GM12878 (cell line): ENCODE measurements at regions of chr12 and their contacts with region 1.

Region 1: GRCh38 chr12:102484428-102484958 is 4.1 kb upstream of the IGF1 start:
- DNase-seq: peak; percentile 84
- ATAC-seq: peak; percentile 80
- H3K4me3 ChIP-seq: peak overlapping the region; percentile 48
- H3K27ac ChIP-seq: peak overlapping the region; percentile 100
- H3K4me1 ChIP-seq: peaks cover 54% of the 10 kb centered on the region
- H3K27me3 ChIP-seq: no peaks in the 10 kb centered on the region
- CTCF ChIP-seq: peak; percentile 79 to 91 (median 81)
- EP300 ChIP-seq: peak; percentile 87 to 90; a peak in 3 of 4 replicates
- POLR2A ChIP-seq: peak; percentile 43; the same call in 1 of the 2 replicates
- RAD21 ChIP-seq: peak; percentile 80

Region 2: DNA sequence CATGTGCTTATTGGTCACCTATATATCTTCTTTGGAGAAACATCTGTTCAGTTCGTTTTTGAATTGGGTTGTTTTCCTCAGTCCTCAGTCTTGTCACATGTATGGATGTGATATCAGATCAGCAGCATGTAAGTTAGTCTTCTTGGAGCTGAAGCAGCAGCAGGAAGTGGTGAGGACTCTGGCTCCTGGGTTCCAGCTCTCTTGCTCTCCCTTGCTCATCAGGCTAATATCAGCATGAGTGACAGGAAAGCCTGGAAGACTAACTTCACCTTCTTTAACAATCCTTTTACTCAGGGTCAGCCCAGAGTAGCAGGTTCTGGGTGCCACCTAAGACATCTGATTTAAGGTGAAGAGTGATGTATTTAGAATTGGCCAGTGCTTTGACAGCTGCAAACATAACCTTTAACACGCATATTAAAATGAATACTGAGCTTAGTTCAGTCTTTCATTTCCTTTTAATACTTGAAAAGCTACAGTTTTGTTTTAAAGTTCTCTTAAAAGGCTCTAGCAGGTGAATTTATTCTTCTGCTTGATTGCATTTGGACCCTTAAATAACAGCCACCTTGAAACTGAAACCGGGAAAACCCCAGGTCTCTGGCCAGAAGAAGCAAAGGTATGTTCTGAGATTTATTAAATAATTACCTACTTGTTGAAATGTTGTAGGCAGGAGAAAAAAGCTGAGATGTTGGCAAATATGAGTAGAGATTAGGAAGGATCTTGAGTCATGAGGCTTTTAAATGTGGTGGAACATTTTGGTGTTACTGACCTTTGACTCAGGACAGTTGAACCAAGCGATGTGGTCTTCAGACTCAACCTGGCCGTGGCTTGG is 552.8 kb before region 1 on chr12:
- CTCF ChIA-PET with region 1: interaction called, 19 read pairs
- POLR2A ChIA-PET with region 1: interaction called, 3 read pairs
- RAD21 ChIA-PET with region 1: interaction called, 13 read pairs
- SMC1A ChIA-PET with region 1: interaction called, 10 read pairs
- in situ Hi-C with region 1: loop called (anchors 5 kb)
- intact Hi-C with region 1: no loop called
- DNase-seq: peak; percentile 82
- ATAC-seq: peak; percentile 26
- H3K4me3 ChIP-seq: peak overlapping the region; percentile 71
- H3K27ac ChIP-seq: peak overlapping the region; percentile 98
- H3K4me1 ChIP-seq: peaks cover 62% of the 10 kb centered on the region
- H3K27me3 ChIP-seq: no peaks in the 10 kb centered on the region
- CTCF ChIP-seq: no peak
- EP300 ChIP-seq: peak; percentile 78 to 85; a peak in 3 of 4 replicates
- POLR2A ChIP-seq: peak; percentile 74
- RAD21 ChIP-seq: no peak

Region 3: DNA sequence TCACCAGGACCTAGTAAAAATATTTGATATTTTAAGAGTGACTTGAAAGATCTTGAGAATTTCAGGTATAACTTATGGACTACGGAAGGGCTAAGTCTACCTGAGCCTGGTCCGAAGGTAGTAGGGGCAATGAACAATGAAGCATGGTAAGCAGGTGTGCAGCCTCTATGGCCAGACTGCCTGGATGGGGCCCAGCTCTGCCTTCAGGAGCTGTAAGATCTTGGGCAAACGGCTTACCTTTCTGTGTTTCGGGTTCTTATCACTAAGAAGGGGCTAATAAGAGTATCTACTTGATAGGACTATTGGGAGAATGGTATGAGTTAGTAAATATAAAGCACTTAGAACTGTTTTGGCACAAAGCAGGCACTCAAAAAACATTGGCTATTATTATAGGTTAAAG is 403.7 kb before region 1 on chr12:
- CTCF ChIA-PET with region 1: no interaction called
- POLR2A ChIA-PET with region 1: no interaction called
- RAD21 ChIA-PET with region 1: no interaction called
- SMC1A ChIA-PET with region 1: no interaction called
- in situ Hi-C with region 1: no loop called
- intact Hi-C with region 1: no loop called
- DNase-seq: no peak
- ATAC-seq: no peak
- H3K4me3 ChIP-seq: no peak overlapping the region
- H3K27ac ChIP-seq: no peak overlapping the region
- H3K4me1 ChIP-seq: no peaks in the 10 kb centered on the region
- H3K27me3 ChIP-seq: no peaks in the 10 kb centered on the region
- CTCF ChIP-seq: no peak
- EP300 ChIP-seq: no peak
- POLR2A ChIP-seq: no peak
- RAD21 ChIP-seq: no peak

Region 4: DNA sequence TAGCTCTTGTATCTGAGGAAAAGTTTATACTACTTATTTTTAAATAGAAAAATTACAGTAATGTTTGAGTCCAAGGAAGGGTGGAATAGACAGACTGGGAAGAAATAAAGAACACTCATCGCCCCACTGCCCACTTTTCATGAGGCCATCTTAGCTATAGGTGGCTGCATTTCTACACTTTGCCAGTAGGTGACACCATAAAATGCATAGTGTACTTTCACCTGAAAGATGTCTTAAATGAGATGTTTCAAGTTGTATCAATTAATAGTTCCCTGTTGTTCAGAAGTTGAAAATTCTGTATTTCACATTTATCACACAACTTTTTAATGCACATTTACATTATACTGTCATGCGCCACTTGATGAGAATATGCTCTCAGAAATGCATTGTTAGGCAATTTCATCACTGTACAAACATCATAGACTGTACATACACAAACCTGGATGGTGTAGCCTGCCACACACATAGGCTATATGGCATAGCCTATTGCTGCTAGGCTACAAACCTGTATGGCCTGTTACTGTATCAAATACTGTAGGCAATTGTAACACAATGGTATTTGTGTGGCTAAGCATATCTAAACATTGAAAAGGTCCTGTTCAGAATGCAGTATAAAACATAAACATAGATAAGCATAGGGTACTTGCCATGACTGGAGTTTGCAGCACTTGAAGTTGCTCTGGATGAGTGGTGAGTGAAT is 314.4 kb before region 1 on chr12:
- CTCF ChIA-PET with region 1: interaction called, 22 read pairs
- POLR2A ChIA-PET with region 1: no interaction called
- RAD21 ChIA-PET with region 1: interaction called, 21 read pairs
- SMC1A ChIA-PET with region 1: interaction called, 34 read pairs
- in situ Hi-C with region 1: no loop called
- intact Hi-C with region 1: loop called (anchors 1 kb)
- DNase-seq: no peak
- ATAC-seq: peak; percentile 73
- H3K4me3 ChIP-seq: no peak overlapping the region
- H3K27ac ChIP-seq: no peak overlapping the region
- H3K4me1 ChIP-seq: peaks cover 5% of the 10 kb centered on the region
- H3K27me3 ChIP-seq: no peaks in the 10 kb centered on the region
- CTCF ChIP-seq: peak; percentile 72 to 79 (median 78)
- EP300 ChIP-seq: no peak
- POLR2A ChIP-seq: no peak
- RAD21 ChIP-seq: peak; percentile 80

Region 5: GRCh38 chr12:102406033-102406584 is 78.4 kb before region 1 on chr12:
- CTCF ChIA-PET with region 1: interaction called, 3 read pairs
- POLR2A ChIA-PET with region 1: interaction called, 3 read pairs
- RAD21 ChIA-PET with region 1: interaction called, 11 read pairs
- SMC1A ChIA-PET with region 1: interaction called, 10 read pairs
- in situ Hi-C with region 1: no loop called
- intact Hi-C with region 1: loop called (anchors 2 kb)
- DNase-seq: peak; percentile 77
- ATAC-seq: peak; percentile 94
- H3K4me3 ChIP-seq: no peak overlapping the region
- H3K27ac ChIP-seq: no peak overlapping the region
- H3K4me1 ChIP-seq: peaks cover 5% of the 10 kb centered on the region; the same call in 1 of the 2 replicates
- H3K27me3 ChIP-seq: no peaks in the 10 kb centered on the region
- CTCF ChIP-seq: no peak
- EP300 ChIP-seq: peak; percentile 67 to 80; a peak in 2 of 4 replicates
- POLR2A ChIP-seq: no peak
- RAD21 ChIP-seq: no peak

Region 6: DNA sequence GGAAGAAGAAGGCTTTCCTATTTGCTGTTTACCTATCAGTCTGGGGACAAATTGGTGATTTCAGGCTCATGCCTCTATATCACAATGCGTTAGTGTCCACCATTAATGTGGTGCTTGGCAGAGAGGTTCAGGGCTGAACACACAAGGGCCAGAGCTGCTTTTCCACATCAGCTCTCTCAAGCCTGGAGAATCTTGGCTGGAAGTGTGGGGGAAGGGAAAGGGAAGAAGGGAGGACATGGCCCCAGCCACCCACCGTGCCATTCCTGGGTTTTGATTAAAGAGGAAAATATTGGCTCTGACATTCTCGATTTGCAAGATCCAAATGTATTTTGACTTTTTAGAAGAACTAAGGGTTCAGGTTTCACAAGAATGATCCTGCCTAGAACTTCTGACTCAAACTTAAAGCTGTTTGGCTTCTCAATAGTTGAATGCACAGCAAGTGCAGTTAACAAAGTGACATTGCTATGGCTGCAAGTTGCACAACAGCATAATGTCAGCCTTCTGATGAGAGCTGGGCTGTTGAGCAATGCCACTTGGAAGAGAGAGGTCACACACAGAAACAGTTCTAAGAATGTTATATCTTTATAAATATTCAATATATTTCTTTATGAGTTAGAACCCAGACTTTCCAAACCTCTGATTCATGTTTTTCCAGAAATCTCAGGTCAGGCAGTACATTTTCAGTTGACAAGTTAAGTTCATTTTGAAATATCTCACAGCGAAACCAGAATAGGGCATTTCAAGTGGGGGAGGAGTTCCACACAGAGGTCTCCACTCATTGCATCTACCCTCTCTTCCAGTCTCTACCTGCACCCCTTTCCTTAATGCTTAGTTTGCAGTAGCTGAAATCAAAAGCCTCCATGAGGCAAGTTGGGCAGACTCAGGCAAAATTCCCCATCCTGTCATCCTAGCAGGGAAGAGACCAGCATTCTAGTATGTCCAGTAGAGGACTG is 29.4 kb before region 1 on chr12:
- CTCF ChIA-PET with region 1: no interaction called
- POLR2A ChIA-PET with region 1: no interaction called
- RAD21 ChIA-PET with region 1: no interaction called
- SMC1A ChIA-PET with region 1: no interaction called
- in situ Hi-C with region 1: no loop called
- intact Hi-C with region 1: no loop called
- DNase-seq: no peak
- ATAC-seq: no peak
- H3K4me3 ChIP-seq: no peak overlapping the region
- H3K27ac ChIP-seq: no peak overlapping the region
- H3K4me1 ChIP-seq: no peaks in the 10 kb centered on the region
- H3K27me3 ChIP-seq: no peaks in the 10 kb centered on the region
- CTCF ChIP-seq: no peak
- EP300 ChIP-seq: no peak
- POLR2A ChIP-seq: no peak
- RAD21 ChIP-seq: no peak

Region 7: GRCh38 chr12:102513272-102513671 is 28.8 kb after region 1 on chr12:
- CTCF ChIA-PET with region 1: interaction called, 24 read pairs
- POLR2A ChIA-PET with region 1: interaction called, 4 read pairs
- RAD21 ChIA-PET with region 1: interaction called, 28 read pairs
- SMC1A ChIA-PET with region 1: interaction called, 43 read pairs
- in situ Hi-C with region 1: no loop called
- intact Hi-C with region 1: no loop called
- DNase-seq: peak; percentile 48
- ATAC-seq: peak; percentile 95
- H3K4me3 ChIP-seq: no peak overlapping the region
- H3K27ac ChIP-seq: peak overlapping the region; percentile 45
- H3K4me1 ChIP-seq: peaks cover 19% of the 10 kb centered on the region
- H3K27me3 ChIP-seq: no peaks in the 10 kb centered on the region
- CTCF ChIP-seq: no peak
- EP300 ChIP-seq: 0 out of 4 replicates have a peak, but pooled peaks of 1 of the 2 experiments have one; percentile 45
- POLR2A ChIP-seq: no peak
- RAD21 ChIP-seq: no peak

Region 8: GRCh38 chr12:102675672-102676071 is 191.2 kb after region 1 on chr12:
- CTCF ChIA-PET with region 1: no interaction called
- POLR2A ChIA-PET with region 1: no interaction called
- RAD21 ChIA-PET with region 1: no interaction called
- SMC1A ChIA-PET with region 1: no interaction called
- in situ Hi-C with region 1: no loop called
- intact Hi-C with region 1: no loop called
- DNase-seq: no peak
- ATAC-seq: no peak
- H3K4me3 ChIP-seq: no peak overlapping the region
- H3K27ac ChIP-seq: no peak overlapping the region
- H3K4me1 ChIP-seq: no peaks in the 10 kb centered on the region
- H3K27me3 ChIP-seq: no peaks in the 10 kb centered on the region
- CTCF ChIP-seq: no peak
- EP300 ChIP-seq: no peak
- POLR2A ChIP-seq: no peak
- RAD21 ChIP-seq: no peak

Region 9: DNA sequence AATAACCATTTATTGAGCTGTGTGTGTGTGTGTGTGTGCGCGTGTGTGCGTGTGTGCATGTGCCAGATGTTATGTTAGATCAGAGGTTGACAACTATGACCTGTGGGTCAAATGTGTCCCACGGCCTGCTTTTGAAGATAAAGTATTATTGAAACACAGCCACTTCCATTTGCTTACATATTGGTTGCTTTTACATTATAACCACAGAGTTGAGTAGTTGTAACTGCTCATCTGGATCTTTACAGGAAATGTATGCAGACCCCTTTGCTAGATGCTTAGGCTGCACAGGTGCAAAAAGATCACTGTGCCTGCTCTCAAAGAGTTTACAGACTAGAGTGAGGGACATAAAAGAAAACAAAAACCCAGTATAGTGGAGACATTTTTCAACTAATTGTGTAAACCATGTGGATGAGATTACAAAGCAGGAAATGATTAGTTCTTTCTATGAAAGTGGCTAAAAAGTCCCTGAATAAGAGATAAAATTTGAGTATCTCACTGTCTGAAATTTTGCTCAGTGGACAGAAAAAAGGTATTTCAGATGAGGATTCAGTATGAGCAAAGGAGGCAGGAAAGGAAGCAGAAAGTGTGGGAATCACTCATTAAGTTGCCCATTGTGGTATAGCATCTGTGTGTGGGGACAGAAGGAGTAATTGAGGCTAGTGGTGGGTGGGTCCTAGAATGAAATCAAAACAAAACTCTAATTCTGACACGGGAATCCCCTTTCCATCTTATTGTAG is 244.2 kb after region 1 on chr12:
- CTCF ChIA-PET with region 1: interaction called, 3 read pairs
- POLR2A ChIA-PET with region 1: no interaction called
- RAD21 ChIA-PET with region 1: interaction called, 4 read pairs
- SMC1A ChIA-PET with region 1: interaction called, 4 read pairs
- in situ Hi-C with region 1: no loop called
- intact Hi-C with region 1: loop called (anchors 2 kb)
- DNase-seq: peak; percentile 77
- ATAC-seq: peak; percentile 82
- H3K4me3 ChIP-seq: 0 out of 2 replicates have a peak overlapping the region, but pooled peaks have one; percentile 13
- H3K27ac ChIP-seq: peak overlapping the region; percentile 81
- H3K4me1 ChIP-seq: peaks cover 21% of the 10 kb centered on the region
- H3K27me3 ChIP-seq: no peaks in the 10 kb centered on the region
- CTCF ChIP-seq: no peak
- EP300 ChIP-seq: no peak
- POLR2A ChIP-seq: no peak
- RAD21 ChIP-seq: no peak